ENCODE measurements at regions of chr3 and their contacts with region 1.

Region 1: DNA sequence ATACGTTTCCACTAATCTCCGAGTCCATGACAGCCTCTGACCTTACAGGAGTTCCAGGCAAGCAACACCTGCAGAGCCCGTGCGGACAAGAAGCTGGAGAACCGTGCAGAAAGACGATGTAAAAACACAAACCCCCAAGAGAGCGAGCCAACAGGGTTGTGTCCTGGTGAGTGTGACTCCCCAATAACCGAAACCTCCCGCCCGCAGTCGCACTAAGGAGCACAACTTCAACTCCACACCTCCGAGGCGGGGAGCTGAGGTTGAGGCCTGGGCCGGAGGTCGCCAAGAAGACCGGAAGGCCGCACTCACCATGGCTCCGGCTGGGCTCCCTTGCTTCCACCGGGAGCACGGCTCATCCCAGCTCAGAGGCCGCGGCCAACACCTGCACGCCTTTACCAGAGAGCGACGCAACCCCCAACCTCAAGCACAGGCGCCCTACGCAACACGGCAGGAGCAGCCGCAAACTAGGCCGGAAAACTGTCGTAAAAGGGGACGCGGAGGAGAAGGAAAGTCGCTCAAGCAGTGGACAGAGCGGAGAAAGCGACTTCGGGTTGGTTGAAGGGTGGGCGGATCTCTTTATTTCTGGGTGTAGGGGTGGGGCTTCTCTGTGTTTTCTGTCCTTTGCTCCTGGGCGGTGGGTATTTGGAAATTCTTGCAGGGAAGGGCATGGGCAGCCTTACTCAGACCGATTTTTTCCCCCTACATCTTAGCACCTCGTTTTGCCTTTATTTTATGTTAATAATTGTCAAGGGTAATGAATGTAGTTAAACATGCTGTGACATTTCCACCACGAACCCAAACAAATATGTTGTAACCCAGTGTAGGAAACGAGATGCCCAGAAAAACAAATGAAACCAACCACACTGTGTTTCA is at the start of gene DNAJC19:
- DNase-seq: peak; percentile 88 to 98 (median 94)

Region 2: DNA sequence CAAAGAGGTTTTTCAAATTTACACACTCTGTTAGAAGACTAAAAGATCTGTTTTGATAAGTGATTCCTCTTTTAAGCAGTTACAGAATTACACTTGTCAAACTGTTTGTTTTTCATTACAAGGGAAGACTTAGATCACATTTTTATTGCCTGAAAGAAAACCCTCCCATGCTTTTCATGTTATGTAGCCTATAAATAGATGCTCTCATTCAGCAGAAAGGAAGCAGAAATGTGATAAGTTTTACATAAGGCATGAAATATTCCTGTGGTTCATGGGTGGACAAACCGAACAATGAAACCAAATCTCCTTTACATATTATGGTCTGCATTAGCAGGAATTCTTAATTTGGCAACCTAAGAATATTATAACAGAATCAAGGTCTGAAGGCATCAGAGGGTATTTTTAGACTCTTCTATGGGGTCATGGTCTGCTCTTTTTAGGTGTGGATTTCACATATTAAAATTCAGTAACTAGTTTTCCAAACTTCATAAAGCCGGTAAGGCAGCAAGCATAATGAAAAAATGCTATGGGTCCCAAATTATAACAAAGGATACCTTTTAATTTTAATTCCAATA is 114.3 kb before region 1 on chr3:
- intact Hi-C with region 1: no loop called
- DNase-seq: no peak

Region 3: GRCh38 chr3:180912304-180913296 is 76.9 kb before region 1 on chr3 and contains the start of gene FXR1:
- intact Hi-C with region 1: loop called (anchors 2 kb)
- DNase-seq: peak; percentile 86 to 97 (median 92)